ENCODE measurements at regions of chr12 and their contacts with region 1.

Region 1: DNA sequence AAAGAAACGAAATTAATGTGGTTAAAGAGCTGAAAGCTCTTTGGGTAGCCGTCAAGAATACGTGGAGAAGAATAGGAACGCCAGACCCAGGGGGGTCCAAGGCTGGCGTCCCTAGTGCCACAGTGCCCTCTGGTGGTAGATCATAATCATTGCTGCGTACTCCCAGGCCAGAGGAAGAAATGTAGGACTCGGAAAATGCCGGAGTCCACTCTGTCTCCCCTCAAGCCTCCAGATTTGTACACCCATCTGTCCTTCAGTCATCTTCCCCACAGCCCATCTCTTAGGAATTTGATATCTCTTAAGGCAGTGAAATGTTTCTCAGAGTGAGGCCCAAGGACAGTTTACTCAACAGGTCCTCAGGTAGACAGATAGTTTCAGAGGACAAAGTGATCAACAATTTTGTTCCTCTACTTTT is 25.4 kb upstream of the PLEKHG6 start:
- DNase-seq: peak; percentile 74 to 81 (median 77)
- ATAC-seq: peak; percentile 98
- H3K4me3 ChIP-seq: no peak overlapping the region
- H3K27ac ChIP-seq: no peak overlapping the region
- H3K4me1 ChIP-seq: no peaks in the 10 kb centered on the region; a peak in 2 of 5 replicates
- H3K27me3 ChIP-seq: peaks cover 0 to 6% of the 10 kb centered on the region in 2 experiments; a peak in 1 of 5 replicates
- CTCF ChIP-seq: peak; percentile 83 to 92 (median 83)
- EP300 ChIP-seq: no peak
- POLR2A ChIP-seq: no peak
- RAD21 ChIP-seq: peak; percentile 90 to 94

Region 2: GRCh38 chr12:5988659-5989116 is 296.4 kb before region 1 on chr12:
- CTCF ChIA-PET with region 1: interaction called, 6 read pairs
- POLR2A ChIA-PET with region 1: no interaction called
- in situ Hi-C with region 1: loop called (anchors 5 kb)
- intact Hi-C with region 1: loop called (anchors 2 kb)
- DNase-seq: peak; percentile 56 to 65 (median 62)
- ATAC-seq: peak; percentile 97
- H3K4me3 ChIP-seq: no peak overlapping the region
- H3K27ac ChIP-seq: no peak overlapping the region
- H3K4me1 ChIP-seq: no peaks in the 10 kb centered on the region
- H3K27me3 ChIP-seq: peaks cover 0 to under 1% of the 10 kb centered on the region in 2 experiments; a peak in 1 of 5 replicates
- CTCF ChIP-seq: peak; percentile 88 to 95 (median 91)
- EP300 ChIP-seq: no peak
- POLR2A ChIP-seq: no peak
- RAD21 ChIP-seq: peak; percentile 61 to 85